Activated CD4-positive, alpha-beta memory T cell treated with anti-CD3 and anti-CD28 coated beads for 36 hours (primary cell): ENCODE measurements at regions of chr6 and their contacts with region 1.

Region 1: DNA sequence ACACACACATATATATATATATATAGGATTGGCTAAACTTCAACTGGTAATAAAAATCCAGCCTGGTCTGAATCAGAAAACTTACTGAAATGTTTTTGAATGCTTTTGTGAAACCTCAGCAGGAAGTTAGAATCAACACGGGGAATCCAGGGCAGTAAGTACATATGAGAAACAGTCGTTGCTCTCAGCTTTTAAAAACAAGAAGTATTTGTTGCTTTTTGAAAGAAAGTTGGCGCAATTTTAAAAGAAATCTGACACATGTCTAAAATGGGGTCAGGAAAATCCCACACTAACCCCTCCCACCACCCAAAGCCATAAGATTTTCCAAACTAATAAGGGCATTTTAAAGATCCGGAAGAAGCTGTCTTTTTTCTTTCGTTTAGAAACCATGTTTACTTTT is 11.5 kb upstream of the CCDC170 start:
- DNase-seq: no peak
- H3K4me3 Mint-ChIP-seq: peak overlapping the region; percentile 59
- H3K27ac Mint-ChIP-seq: peak overlapping the region; percentile 81
- H3K4me1 Mint-ChIP-seq: peaks cover 22% of the 10 kb centered on the region
- H3K27me3 Mint-ChIP-seq: no peaks in the 10 kb centered on the region

Region 2: DNA sequence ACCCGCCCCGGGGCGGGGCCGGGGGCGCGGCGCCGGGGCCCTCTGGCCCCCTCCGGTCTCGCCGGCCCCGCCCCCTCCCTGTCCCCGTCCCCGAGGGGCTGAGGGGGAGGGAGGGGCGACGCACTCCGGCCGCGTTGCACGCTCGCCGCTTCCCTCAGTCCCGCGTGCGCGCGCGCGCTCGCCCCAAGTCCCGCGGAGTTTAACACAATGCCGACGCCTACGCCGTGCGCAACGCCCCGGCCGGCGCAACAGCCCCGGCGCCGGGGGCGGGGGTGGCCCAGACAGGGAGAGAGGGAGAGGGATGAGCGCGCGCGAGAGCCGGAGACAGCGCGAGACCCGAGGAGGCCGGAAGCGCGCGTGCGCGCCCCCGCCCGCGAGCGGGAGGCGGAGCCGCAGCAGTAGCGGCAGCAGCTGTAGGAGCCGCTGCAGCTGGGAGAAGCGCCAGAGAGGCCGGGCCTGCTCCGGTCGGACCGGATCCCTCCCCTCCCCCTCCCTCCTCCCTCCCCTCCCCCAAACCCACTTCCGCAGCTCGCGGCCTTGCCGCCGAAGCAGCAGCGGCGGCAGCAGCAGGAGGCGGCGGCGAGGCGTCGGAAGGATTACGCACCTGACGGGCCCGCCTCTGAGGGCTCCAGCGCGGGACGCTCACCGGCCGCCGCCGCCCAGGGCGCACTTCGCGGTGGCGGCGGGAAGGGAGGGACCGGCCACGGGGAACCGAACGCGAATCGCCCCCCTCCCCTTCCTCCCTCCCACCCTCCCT is 91.8 kb before region 1 on chr6:
- CTCF ChIA-PET with region 1: no interaction called
- POLR2A ChIA-PET with region 1: no interaction called
- intact Hi-C with region 1: no loop called
- DNase-seq: peak; percentile 99
- H3K4me3 Mint-ChIP-seq: peak overlapping the region; percentile 98
- H3K27ac Mint-ChIP-seq: peak overlapping the region; percentile 72
- H3K4me1 Mint-ChIP-seq: peaks cover 63% of the 10 kb centered on the region
- H3K27me3 Mint-ChIP-seq: no peaks in the 10 kb centered on the region

Region 3: GRCh38 chr6:151493804-151494234 is 11.5 kb after region 1 on chr6 and contains the start of gene CCDC170:
- CTCF ChIA-PET with region 1: interaction called, 3 read pairs
- POLR2A ChIA-PET with region 1: no interaction called
- intact Hi-C with region 1: loop called (anchors 1 kb)
- DNase-seq: peak; percentile 32
- H3K4me3 Mint-ChIP-seq: peak within 1 kb of the TSS; percentile 71
- H3K27ac Mint-ChIP-seq: no peak within 1 kb of the TSS
- H3K4me1 Mint-ChIP-seq: peaks cover 17% of the 10 kb centered on the region
- H3K27me3 Mint-ChIP-seq: peaks cover 34% of the 10 kb centered on the region
- total RNA-seq, gene CCDC170: not detected